Activated CD8-positive, alpha-beta T cell treated with anti-CD3 and anti-CD28 coated beads for 36 hours (primary cell): ENCODE measurements at regions of chr5 and their contacts with region 1.

Region 1: DNA sequence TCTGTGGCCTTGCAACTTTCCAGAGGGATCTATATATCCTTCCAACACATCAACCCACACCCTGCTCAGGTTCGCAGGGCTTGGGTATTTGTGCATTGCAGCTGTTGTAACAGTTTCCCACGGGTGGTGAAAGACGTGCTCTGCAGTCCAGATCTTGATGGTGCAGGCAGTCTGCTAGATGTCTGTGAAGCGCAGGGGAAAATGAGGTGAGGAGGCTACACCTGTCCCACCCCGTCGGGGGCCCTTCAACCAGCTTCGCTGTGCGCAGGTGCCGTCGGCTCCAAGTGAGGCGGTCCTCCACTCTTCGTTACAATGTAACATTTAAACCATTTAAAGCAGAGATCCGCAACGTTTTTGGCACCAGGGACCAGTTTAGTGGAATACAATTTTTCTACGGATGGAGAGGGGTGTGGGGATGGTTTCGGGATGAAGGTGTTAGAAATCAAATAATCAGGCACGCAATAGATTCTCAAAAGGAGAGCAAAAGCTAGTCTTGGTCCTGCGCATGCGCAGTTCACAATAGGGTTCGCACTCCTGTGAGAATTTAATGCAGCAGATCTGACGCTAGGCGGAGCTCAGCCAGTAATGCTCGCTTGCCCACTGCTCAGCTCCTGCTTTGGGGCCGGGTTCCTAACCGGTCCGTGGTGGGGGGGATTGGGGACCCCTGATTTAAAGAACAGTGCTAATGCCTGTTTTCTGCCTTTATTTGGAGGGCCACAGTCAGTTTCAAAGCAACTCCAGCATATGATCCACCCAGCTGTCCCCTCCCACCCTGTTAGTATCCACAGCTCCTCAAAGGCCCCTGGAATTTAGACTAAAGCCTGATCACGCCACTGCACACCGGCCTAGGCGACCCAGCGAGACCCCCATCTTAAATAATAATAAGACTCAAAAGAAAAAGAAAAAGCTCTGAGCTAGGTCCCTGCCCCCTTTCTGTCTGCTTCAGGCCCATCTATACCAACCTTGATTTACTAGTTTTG is 97.1 kb upstream of the SELENOP start:
- DNase-seq: peak; percentile 94
- ATAC-seq: peak; percentile 94
- H3K4me3 Mint-ChIP-seq: peak overlapping the region; percentile 90
- H3K27ac Mint-ChIP-seq: peak overlapping the region; percentile 72
- H3K4me1 Mint-ChIP-seq: peaks cover 13% of the 10 kb centered on the region
- H3K27me3 Mint-ChIP-seq: peaks cover 10% of the 10 kb centered on the region
- CTCF ChIP-seq: peak; percentile 94

Region 2: DNA sequence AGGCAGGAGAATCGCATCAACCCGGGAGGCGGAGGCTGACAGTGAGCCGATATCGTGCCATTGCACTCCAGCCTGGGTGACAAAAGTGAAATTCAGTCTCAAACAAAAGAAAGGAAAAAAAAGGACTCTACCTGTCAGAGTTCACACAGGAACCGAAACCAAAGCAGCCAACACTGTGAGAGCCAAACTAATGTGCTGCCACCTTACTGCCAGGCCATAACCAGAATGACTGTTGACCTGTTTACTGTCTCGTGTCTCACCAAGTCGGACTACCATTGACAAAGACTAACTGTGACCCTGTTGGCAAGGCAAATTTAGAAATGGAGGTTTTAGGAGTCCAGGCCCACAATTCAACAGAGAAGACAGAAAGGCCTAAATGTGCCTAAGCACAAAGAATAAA is 18.9 kb after region 1 on chr5:
- CTCF ChIA-PET with region 1: interaction called, 10 read pairs
- POLR2A ChIA-PET with region 1: interaction called, 4 read pairs
- intact Hi-C with region 1: no loop called
- DNase-seq: no peak
- ATAC-seq: no peak
- H3K4me3 Mint-ChIP-seq: no peak overlapping the region
- H3K27ac Mint-ChIP-seq: no peak overlapping the region
- H3K4me1 Mint-ChIP-seq: no peaks in the 10 kb centered on the region
- H3K27me3 Mint-ChIP-seq: no peaks in the 10 kb centered on the region
- CTCF ChIP-seq: no peak

Region 3: GRCh38 chr5:42970636-42971559 is 62.1 kb after region 1 on chr5:
- CTCF ChIA-PET with region 1: interaction called, 10 read pairs
- POLR2A ChIA-PET with region 1: no interaction called
- intact Hi-C with region 1: no loop called
- DNase-seq: peak; percentile 37
- ATAC-seq: no peak
- H3K4me3 Mint-ChIP-seq: no peak overlapping the region
- H3K27ac Mint-ChIP-seq: no peak overlapping the region
- H3K4me1 Mint-ChIP-seq: peaks cover 6% of the 10 kb centered on the region
- H3K27me3 Mint-ChIP-seq: no peaks in the 10 kb centered on the region
- CTCF ChIP-seq: no peak

Region 4: DNA sequence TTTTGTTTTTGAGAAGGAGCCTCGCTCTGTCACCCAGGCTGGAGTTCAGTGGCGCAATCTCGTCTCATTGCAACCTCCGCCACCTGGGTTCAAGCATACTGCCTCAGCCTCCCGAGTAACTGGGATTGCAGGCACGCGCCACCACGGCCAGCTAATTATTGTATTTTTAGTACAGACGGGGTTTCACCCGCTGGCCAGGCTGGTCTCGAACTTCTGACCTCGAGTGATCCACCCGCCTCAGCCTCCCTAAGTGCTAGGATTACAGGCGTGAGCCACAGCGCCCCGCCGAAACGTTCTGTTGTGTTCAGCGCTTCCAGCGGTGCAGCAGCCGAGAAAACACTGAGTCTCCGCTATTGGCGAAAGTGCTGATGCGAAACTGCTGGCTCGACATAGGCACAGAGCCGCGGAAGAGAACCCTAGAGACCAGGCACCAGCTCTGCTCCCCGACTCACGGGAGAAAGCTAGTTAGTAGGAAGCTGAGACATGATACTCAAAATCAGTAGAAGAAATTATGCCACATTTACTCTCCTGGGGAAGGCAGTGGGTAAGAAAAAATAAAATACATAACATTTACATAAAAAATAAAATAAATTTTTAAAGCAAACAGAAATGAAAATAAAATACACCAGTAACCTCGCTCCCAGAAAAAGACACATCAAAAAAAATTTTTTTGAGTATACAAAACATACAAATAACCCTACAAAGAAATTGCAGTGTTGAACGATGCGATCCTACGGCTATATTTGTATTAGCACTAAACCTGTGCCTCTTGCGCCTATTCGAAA is 99.8 kb after region 1 on chr5:
- CTCF ChIA-PET with region 1: interaction called, 6 read pairs
- POLR2A ChIA-PET with region 1: interaction called, 10 read pairs
- intact Hi-C with region 1: no loop called
- DNase-seq: peak; percentile 95
- ATAC-seq: peak; percentile 70
- H3K4me3 Mint-ChIP-seq: peak overlapping the region; percentile 93
- H3K27ac Mint-ChIP-seq: peak overlapping the region; percentile 99
- H3K4me1 Mint-ChIP-seq: peaks cover 30% of the 10 kb centered on the region
- H3K27me3 Mint-ChIP-seq: no peaks in the 10 kb centered on the region
- CTCF ChIP-seq: no peak

Region 5: DNA sequence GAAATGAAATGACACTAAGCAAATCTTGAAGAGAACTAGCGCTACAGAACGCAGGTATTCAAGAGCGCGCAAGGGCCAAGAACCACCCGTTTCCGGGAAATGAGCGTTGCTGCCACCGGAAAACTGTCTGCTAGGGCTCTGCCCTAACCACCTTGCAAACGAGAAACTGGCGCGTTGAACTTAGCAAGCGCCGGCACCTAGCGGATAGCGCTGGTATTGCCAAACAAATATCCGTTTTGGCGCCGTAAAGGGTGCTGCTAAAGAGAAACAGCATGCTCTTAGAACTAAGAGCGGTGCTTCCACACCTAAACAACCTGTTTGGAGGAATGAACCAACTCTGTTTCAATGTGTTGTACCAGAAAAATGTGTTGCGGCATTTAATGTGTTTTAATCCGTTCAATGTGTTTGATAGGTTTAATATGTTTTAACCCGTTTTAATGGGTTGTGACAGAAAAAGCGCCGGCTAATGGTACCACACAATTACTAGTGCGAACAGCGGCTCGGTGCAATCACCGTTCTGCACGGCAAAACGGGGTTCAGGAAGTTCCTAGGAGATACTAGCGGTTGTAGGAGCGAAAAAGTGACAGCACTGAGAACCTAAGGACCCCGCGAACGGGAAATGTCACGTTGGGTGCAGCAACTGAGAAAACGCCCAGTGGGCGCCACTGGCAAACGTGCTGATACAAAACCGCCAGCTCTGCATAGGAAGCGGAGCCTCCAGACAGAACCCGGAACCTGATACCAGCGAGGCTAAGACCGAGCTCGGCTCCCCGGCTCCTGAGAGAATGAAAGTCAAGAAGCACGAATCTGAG is 131.7 kb after region 1 on chr5 and contains the start of gene ANXA2R:
- CTCF ChIA-PET with region 1: interaction called, 26 read pairs
- POLR2A ChIA-PET with region 1: interaction called, 7 read pairs
- intact Hi-C with region 1: loop called (anchors 2 kb)
- DNase-seq: peak; percentile 97
- ATAC-seq: peak; percentile 67
- H3K4me3 Mint-ChIP-seq: peak within 1 kb of the TSS; percentile 81
- H3K27ac Mint-ChIP-seq: peak within 1 kb of the TSS; percentile 98
- H3K4me1 Mint-ChIP-seq: peaks cover 38% of the 10 kb centered on the region
- H3K27me3 Mint-ChIP-seq: no peaks in the 10 kb centered on the region
- CTCF ChIP-seq: peak; percentile 76
- total RNA-seq, gene ANXA2R: 8.0 to 10.4 TPM